ENCODE measurements at regions of chr2 and their contacts with region 1.

Region 1: GRCh38 chr2:8544786-8545694 is 136.8 kb upstream of the ID2 start:
- DNase-seq: peak in 8 of 9 donors; percentile 10 to 85 (median 32)
- ATAC-seq: peak; percentile 82
- H3K4me3 ChIP-seq: peak overlapping the region; percentile 17
- H3K4me3 Mint-ChIP-seq: peak overlapping the region in 7 of 10 donors; percentile 2 to 64 (median 23)
- H3K27ac ChIP-seq: no peak overlapping the region
- H3K27ac Mint-ChIP-seq: peak overlapping the region in 4 of 9 donors; percentile 43 to 97 (median 60)
- H3K4me1 ChIP-seq: peaks cover 10 to 57% of the 10 kb centered on the region in 2 donors
- H3K4me1 Mint-ChIP-seq: peaks cover 32 to 84% (median 42%) of the 10 kb centered on the region in 7 donors
- H3K27me3 ChIP-seq: no peaks in the 10 kb centered on the region
- H3K27me3 Mint-ChIP-seq: no peaks in the 10 kb centered on the region

Region 2: DNA sequence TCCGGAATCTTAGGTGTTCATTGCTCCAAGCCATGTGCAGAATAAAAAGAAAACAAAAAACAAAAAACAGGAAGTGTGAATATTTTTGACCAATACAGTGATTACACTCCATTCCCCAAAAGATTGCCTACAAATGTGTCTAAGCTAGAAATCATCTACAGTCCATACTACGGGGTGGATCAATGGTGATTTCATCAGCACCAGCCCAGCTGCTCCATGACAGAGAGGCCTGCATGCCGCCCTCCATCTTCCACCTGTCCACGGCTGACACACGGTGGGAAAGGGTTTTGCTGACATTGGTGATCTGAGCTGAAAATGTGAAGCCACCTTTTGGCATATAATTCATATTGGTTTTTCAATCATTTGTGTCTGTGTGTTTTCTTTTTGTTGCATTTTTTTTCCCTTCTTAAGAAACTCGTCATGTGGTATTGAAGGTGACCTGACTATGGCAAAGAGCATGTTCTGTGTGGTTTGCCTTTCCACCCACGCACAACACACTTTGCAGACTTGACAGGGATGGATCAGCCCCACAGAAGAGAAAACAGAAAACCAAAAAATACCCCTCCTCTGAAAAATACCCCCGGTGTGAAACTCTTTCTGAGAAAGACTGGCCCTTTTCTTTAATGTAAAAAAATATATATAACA is 1094.7 kb before region 1 on chr2:
- CTCF ChIA-PET with region 1: no interaction called
- POLR2A ChIA-PET with region 1: no interaction called
- intact Hi-C with region 1: loop called in 1 of 2 experiments (anchors 10 kb)
- DNase-seq: peak in 8 of 9 donors; percentile 66 to 88 (median 72)
- ATAC-seq: peak; percentile 91
- H3K4me3 ChIP-seq: no peak overlapping the region
- H3K4me3 Mint-ChIP-seq: peak overlapping the region; percentile 39 to 87 (median 77)
- H3K27ac ChIP-seq: peak overlapping the region; percentile 60
- H3K27ac Mint-ChIP-seq: peak overlapping the region; percentile 90 to 98 (median 96)
- H3K4me1 ChIP-seq: peaks cover 41 to 65% of the 10 kb centered on the region in 2 donors
- H3K4me1 Mint-ChIP-seq: peaks cover 44 to 93% (median 78%) of the 10 kb centered on the region in 7 donors
- H3K27me3 ChIP-seq: no peaks in the 10 kb centered on the region
- H3K27me3 Mint-ChIP-seq: no peaks in the 10 kb centered on the region

Region 3: GRCh38 chr2:7725171-7725849 is 819.7 kb before region 1 on chr2:
- CTCF ChIA-PET with region 1: no interaction called
- POLR2A ChIA-PET with region 1: no interaction called
- intact Hi-C with region 1: loop called in 1 of 2 experiments (anchors 5 kb)
- DNase-seq: peak in 5 of 9 donors; percentile 17 to 51 (median 38)
- ATAC-seq: peak; percentile 78
- H3K4me3 ChIP-seq: peak overlapping the region; percentile 25
- H3K4me3 Mint-ChIP-seq: peak overlapping the region in 9 of 10 donors; percentile 26 to 86 (median 58)
- H3K27ac ChIP-seq: no peak overlapping the region
- H3K27ac Mint-ChIP-seq: peak overlapping the region; percentile 8 to 89 (median 65)
- H3K4me1 ChIP-seq: peaks cover 17 to 34% of the 10 kb centered on the region in 2 donors
- H3K4me1 Mint-ChIP-seq: peaks cover 13 to 63% (median 34%) of the 10 kb centered on the region in 7 donors
- H3K27me3 ChIP-seq: no peaks in the 10 kb centered on the region
- H3K27me3 Mint-ChIP-seq: no peaks in the 10 kb centered on the region

Region 4: GRCh38 chr2:8162552-8162951 is 382.5 kb before region 1 on chr2:
- CTCF ChIA-PET with region 1: no interaction called
- POLR2A ChIA-PET with region 1: no interaction called
- intact Hi-C with region 1: no loop called
- DNase-seq: no peak
- ATAC-seq: no peak
- H3K4me3 ChIP-seq: no peak overlapping the region
- H3K4me3 Mint-ChIP-seq: no peak overlapping the region
- H3K27ac ChIP-seq: no peak overlapping the region
- H3K27ac Mint-ChIP-seq: no peak overlapping the region
- H3K4me1 ChIP-seq: no peaks in the 10 kb centered on the region
- H3K4me1 Mint-ChIP-seq: peaks cover 0 to 6% (median 0%) of the 10 kb centered on the region in 7 donors
- H3K27me3 ChIP-seq: no peaks in the 10 kb centered on the region
- H3K27me3 Mint-ChIP-seq: peaks cover 0 to 3% (median 0%) of the 10 kb centered on the region in 5 donors

Region 5: DNA sequence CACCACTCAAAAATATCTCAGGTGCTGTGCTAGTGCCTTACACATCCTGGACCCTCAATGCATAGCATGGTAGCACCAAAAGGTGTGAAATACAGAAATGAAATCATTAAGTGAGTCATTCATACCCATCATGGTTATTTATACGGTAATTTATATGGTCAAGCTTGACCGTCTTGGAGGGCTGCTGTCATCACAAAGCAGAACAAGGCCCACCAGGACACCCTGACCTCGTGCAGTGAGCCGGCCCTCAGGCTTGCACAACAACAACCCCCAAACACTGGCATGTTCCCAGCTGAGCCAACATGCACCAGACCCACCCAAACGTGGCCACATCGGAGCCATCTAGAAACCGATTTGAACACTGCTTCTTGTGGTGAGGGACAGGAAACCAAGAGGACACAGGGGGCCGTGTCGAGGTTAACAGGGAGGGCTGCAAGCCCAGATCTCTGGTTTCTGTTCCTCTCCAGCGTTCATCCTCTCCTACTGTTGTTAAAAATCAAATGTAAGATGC is 241.7 kb before region 1 on chr2:
- CTCF ChIA-PET with region 1: no interaction called
- POLR2A ChIA-PET with region 1: no interaction called
- intact Hi-C with region 1: loop called in 1 of 2 experiments (anchors 1 kb)
- DNase-seq: peak in 8 of 9 donors; percentile 10 to 73 (median 54)
- ATAC-seq: peak; percentile 75
- H3K4me3 ChIP-seq: peak overlapping the region; percentile 34
- H3K4me3 Mint-ChIP-seq: peak overlapping the region in 9 of 10 donors; percentile 3 to 77 (median 50)
- H3K27ac ChIP-seq: no peak overlapping the region
- H3K27ac Mint-ChIP-seq: peak overlapping the region in 6 of 9 donors; percentile 15 to 85 (median 47)
- H3K4me1 ChIP-seq: peaks cover 14 to 53% of the 10 kb centered on the region in 2 donors
- H3K4me1 Mint-ChIP-seq: peaks cover 25 to 88% (median 39%) of the 10 kb centered on the region in 7 donors
- H3K27me3 ChIP-seq: no peaks in the 10 kb centered on the region
- H3K27me3 Mint-ChIP-seq: no peaks in the 10 kb centered on the region

Region 6: DNA sequence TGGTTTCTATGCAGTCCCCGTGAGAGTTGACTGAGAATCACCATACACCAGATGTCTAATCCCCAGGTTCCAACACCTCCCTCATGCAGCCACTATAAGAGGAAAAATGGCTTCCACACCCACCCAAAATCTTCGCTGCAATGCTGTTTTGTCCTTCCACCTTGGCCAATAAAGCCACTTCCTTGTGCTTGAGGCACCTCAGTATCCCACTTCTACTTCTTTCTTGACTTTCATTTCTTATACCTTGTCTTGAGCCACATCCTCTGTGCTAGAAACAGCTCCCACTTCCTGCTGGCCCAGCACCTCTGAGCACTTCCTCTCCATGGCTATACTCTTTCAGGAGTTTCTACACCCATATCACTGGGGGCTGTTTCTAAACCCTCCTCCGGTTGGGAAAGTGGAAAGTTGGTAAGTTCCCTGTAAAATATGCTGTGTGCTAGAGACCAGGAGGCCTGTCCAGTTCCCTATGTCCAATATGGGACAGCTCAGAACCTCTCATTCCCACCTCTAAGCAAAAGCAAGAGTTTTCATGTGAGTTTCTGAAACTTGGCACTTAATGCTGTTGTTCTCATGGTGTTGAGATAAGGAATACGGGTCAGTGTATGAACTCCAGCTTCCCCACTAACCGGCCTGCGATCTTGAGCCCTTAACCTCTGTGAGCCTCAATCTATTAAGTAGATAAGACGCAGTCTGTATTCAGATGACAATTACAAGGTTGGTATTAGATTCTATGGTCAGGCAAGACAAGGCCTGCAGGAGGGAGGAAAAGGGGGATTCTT is 72.3 kb before region 1 on chr2:
- CTCF ChIA-PET with region 1: no interaction called
- POLR2A ChIA-PET with region 1: no interaction called
- intact Hi-C with region 1: loop called in 1 of 2 experiments (anchors 5 kb)
- DNase-seq: peak in 1 of 9 donors; percentile 8
- ATAC-seq: peak; percentile 36
- H3K4me3 ChIP-seq: peak overlapping the region; percentile 15
- H3K4me3 Mint-ChIP-seq: peak overlapping the region in 9 of 10 donors; percentile 5 to 58 (median 45)
- H3K27ac ChIP-seq: no peak overlapping the region
- H3K27ac Mint-ChIP-seq: peak overlapping the region; percentile 4 to 85 (median 15)
- H3K4me1 ChIP-seq: peaks cover 19 to 64% of the 10 kb centered on the region in 2 donors
- H3K4me1 Mint-ChIP-seq: peaks cover 34 to 86% (median 44%) of the 10 kb centered on the region in 7 donors
- H3K27me3 ChIP-seq: no peaks in the 10 kb centered on the region
- H3K27me3 Mint-ChIP-seq: no peaks in the 10 kb centered on the region

Region 7: DNA sequence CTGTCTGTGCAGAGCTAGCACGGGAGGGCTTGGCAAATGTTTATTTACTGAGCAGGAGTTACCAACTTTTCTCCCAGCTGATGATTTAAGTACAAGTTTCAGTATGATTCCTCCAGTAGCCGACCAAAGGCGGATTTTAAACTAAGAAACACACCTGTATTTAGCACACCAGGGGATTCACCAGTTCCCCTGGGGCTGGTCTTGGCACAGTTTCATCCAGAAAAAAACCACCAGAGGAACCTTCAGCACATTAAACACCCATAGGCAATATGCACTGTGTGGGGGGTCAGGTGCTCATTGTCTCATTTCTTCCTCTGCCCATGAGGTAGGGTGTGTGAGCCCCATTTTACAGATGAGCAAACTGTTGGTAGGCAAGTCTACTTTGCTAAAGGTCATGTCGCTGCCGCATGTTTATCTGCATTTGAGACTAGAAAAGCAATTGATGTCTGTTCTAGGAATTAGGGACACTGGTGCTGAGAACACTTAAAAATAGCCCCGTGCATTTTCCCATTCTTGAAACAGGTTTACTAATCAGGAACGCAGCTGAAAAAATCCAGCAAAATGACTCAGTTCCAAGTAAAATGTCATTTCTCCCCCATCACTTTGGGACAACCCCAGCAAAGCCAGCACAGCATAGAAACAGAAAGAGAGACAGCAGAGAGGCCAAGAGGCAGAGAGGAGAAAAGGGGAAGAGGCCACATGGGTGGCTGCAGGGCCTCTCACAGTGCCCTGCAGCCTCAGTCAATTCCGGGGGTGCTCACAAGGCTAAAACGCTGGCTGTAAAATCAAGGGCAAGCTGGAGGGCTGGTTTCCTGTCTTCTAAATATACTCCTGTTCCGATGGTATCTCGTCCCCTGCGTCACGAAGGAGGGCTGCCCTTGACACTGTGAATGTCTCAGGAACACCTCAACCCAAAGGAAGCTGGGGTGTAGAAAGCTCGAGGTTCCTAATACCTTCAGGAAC is 30.0 kb before region 1 on chr2:
- CTCF ChIA-PET with region 1: no interaction called
- POLR2A ChIA-PET with region 1: no interaction called
- intact Hi-C with region 1: loop called in 1 of 2 experiments (anchors 1 kb)
- DNase-seq: peak in 6 of 9 donors; percentile 11 to 65 (median 28)
- ATAC-seq: peak; percentile 77
- H3K4me3 ChIP-seq: peak overlapping the region; percentile 18
- H3K4me3 Mint-ChIP-seq: peak overlapping the region; percentile 5 to 63 (median 54)
- H3K27ac ChIP-seq: no peak overlapping the region
- H3K27ac Mint-ChIP-seq: peak overlapping the region in 6 of 9 donors; percentile 7 to 88 (median 30)
- H3K4me1 ChIP-seq: peaks cover 7 to 51% of the 10 kb centered on the region in 2 donors
- H3K4me1 Mint-ChIP-seq: peaks cover 15 to 67% (median 21%) of the 10 kb centered on the region in 7 donors
- H3K27me3 ChIP-seq: no peaks in the 10 kb centered on the region
- H3K27me3 Mint-ChIP-seq: peaks cover 0 to 1% (median 0%) of the 10 kb centered on the region in 5 donors